ENCODE measurements at regions of chr4 and their contacts with region 1.

Region 1: DNA sequence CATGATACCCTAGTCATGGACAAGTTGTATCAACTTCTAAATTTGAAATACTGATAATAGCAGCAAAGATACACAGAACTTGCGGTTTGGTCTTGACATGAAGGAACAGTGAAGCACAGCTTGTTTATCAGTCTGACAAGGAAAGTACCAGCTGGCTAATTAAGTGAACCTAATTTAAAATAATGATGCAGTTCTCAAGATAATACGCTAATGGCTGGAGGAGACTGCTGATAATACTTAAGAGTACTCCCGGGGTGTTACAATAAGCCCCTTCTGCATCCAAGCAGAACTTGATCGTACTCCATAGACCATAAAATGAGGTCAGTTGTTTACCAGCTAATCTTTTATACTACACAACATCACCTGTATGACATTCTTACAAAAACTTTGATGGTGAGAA is 697.5 kb downstream of the FSTL5 start:
- DNase-seq: no peak
- H3K4me3 ChIP-seq: no peak overlapping the region
- H3K27ac ChIP-seq: no peak overlapping the region
- H3K4me1 ChIP-seq: no peaks in the 10 kb centered on the region
- H3K27me3 ChIP-seq: no peaks in the 10 kb centered on the region
- CTCF ChIP-seq: no peak
- EP300 ChIP-seq: no peak
- POLR2A ChIP-seq: no peak

Region 2: GRCh38 chr4:161287678-161288352 is 178.5 kb before region 1 on chr4:
- intact Hi-C with region 1: no loop called
- DNase-seq: no peak
- H3K4me3 ChIP-seq: no peak overlapping the region
- H3K27ac ChIP-seq: no peak overlapping the region
- H3K4me1 ChIP-seq: no peaks in the 10 kb centered on the region
- H3K27me3 ChIP-seq: no peaks in the 10 kb centered on the region
- CTCF ChIP-seq: no peak
- EP300 ChIP-seq: no peak
- POLR2A ChIP-seq: no peak

Region 3: GRCh38 chr4:161581262-161582230 is 115.2 kb after region 1 on chr4:
- intact Hi-C with region 1: loop called in 1 of 4 experiments (anchors 5 kb)
- DNase-seq: no peak
- H3K4me3 ChIP-seq: no peak overlapping the region
- H3K27ac ChIP-seq: no peak overlapping the region
- H3K4me1 ChIP-seq: no peaks in the 10 kb centered on the region
- H3K27me3 ChIP-seq: no peaks in the 10 kb centered on the region
- CTCF ChIP-seq: no peak
- EP300 ChIP-seq: no peak
- POLR2A ChIP-seq: no peak

Measured in ovary (tissue), 10 donors.